ENCODE measurements at regions of chr4 and their contacts with region 1.

Region 1: DNA sequence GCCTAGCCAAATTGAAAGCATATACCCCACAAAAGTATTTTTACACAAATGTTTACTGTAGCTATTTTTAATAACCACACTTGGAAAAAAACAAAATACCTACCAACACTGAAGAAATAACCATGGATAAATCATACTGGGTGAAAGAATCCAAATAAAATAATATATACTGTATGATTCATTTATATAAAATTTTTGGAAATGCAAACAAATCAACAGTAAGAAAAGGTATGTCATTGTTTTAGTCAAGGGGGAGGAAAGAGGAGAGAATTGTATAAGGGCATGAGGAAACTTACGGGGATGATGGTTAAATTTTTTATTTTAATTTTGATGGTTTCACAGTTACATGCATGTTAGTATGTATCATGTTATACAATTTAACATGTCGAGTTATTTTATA is 557.8 kb downstream of the TECRL start:
- DNase-seq: no peak
- ATAC-seq: no peak
- H3K4me3 ChIP-seq: no peak overlapping the region
- H3K4me1 ChIP-seq: no peaks in the 10 kb centered on the region
- CTCF ChIP-seq: no peak

Region 2: DNA sequence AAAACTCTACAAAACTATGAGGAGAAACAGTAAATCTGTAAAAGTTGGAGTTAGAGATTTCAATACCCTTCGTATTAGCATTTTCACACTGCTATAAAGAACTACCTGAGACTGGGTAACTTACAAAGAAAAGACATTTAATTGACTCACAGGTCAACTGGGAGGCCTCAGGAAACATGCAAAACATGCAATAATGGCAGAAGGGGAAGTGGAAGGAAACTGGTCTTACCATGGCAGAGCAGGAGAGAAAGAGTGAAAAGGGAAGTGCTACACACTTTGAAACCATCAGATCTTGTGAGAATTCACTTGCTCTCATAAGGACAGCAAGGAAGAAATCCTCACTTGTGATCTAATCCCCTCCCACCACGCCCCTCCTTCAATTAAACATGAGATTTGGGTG is 392.2 kb before region 1 on chr4:
- intact Hi-C with region 1: no loop called
- DNase-seq: no peak
- ATAC-seq: no peak
- H3K4me3 ChIP-seq: no peak overlapping the region
- H3K4me1 ChIP-seq: no peaks in the 10 kb centered on the region
- CTCF ChIP-seq: no peak

Region 3: DNA sequence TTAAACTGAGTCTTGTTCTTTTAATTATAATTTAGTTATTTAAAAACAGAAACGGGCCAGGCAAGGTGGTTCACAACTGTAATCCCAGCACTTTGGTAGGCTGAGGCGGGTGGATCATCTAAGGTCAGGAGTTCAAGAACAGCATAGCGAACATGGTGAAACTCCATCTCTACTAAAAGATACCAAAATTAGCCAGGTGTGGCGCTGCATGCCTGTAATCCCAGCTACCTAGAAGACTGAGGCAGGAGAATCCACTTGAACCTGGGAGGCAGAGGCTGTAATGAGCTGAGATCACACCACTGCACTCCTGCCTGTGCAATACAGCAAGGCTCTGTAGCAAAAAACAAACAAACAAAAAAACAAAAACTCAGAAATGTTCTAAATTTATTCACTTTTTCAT is 295.2 kb before region 1 on chr4:
- intact Hi-C with region 1: no loop called
- DNase-seq: no peak
- ATAC-seq: no peak
- H3K4me3 ChIP-seq: no peak overlapping the region
- H3K4me1 ChIP-seq: no peaks in the 10 kb centered on the region
- CTCF ChIP-seq: no peak

Region 4: DNA sequence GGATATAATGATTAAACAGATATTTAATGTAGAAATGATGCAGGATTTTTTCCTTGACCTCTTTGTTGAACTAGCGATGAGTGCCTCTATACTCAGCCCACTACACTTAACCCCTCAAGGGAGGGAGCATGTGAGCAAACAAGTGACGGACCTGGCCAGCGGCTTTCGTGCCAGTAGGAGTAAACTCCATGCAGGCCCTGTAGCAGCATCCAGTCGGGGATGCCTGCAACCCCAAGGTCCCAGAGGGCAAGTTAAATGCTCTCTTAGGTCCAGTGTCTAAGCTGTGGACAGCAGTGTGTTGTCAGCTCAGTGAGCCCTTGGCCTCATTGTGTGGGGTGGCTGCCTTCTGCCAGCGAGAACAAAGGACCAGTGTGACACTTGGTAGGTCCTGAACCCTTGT is 150.9 kb before region 1 on chr4:
- intact Hi-C with region 1: loop called in 1 of 2 experiments (anchors 5 kb)
- DNase-seq: peak in 1 of 3 donors; percentile 19
- ATAC-seq: no peak
- H3K4me3 ChIP-seq: no peak overlapping the region
- H3K4me1 ChIP-seq: no peaks in the 10 kb centered on the region
- CTCF ChIP-seq: no peak

Region 5: DNA sequence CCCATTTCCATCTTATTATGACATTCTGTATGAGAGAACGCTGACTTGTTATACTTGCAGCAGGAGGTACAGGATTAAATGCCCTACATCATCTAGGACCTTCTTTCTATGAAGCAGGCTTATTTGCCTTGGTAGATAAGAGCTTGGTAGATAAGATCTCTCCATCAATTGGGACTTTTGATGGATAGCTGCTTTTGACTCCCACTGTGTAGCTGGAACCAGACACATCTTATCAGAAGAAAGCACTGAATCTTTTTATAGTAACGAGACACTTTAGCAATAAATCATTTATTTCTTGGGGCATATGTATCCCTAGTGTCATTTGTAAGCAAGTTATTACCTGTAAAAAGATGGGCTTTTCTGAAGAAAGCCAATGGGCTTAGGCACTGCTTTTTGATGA is 56.2 kb before region 1 on chr4:
- intact Hi-C with region 1: no loop called
- DNase-seq: no peak
- ATAC-seq: no peak
- H3K4me3 ChIP-seq: no peak overlapping the region
- H3K4me1 ChIP-seq: no peaks in the 10 kb centered on the region
- CTCF ChIP-seq: no peak

Region 6: DNA sequence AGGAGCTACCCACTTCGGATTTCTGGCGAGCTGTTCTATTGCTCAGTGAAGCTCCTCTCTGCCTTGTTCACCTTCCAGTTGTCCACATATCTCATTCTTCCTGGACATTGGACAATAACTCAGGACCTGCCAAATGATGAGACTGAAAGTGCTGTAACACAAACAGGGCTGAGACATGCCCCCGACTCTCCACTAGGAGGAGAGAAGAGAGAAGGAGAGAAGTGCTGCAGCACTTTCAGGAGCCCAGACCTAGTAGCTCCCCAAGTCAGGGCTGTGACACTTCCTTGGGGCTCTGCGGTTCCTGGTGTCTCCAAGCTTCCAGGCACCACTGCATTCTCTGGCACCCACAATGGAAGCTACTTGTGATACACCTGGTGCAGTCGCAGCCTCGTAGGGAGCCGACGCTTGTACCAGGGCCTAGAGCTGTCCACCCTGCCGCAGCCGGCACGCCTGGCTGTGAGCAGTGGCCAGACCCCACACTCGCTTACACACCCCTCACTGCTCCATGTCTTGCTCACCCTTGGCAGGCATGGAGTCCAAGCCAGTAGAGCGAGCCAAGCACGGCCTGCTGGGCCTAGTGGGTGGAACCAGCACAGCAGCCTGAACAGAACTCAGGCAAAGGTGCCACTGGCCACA is 322.9 kb after region 1 on chr4:
- intact Hi-C with region 1: no loop called
- DNase-seq: no peak
- ATAC-seq: no peak
- H3K4me3 ChIP-seq: no peak overlapping the region
- H3K4me1 ChIP-seq: no peaks in the 10 kb centered on the region
- CTCF ChIP-seq: no peak